Heart right ventricle (tissue), 16 donors: ENCODE measurements at regions of chr1 and their contacts with region 1.

Region 1: GRCh38 chr1:93708734-93709481 is 27.3 kb upstream of the BCAR3 start:
- DNase-seq: peak; percentile 33 to 60
- ATAC-seq: peak; percentile 82 to 92 (median 90)
- H3K4me3 ChIP-seq: no peak overlapping the region
- H3K27ac ChIP-seq: peak overlapping the region in 9 of 10 donors; percentile 28 to 70 (median 50)
- H3K4me1 ChIP-seq: peaks cover 11 to 46% (median 32%) of the 10 kb centered on the region in 9 donors
- H3K27me3 ChIP-seq: no peaks in the 10 kb centered on the region
- CTCF ChIP-seq: no peak

Region 2: DNA sequence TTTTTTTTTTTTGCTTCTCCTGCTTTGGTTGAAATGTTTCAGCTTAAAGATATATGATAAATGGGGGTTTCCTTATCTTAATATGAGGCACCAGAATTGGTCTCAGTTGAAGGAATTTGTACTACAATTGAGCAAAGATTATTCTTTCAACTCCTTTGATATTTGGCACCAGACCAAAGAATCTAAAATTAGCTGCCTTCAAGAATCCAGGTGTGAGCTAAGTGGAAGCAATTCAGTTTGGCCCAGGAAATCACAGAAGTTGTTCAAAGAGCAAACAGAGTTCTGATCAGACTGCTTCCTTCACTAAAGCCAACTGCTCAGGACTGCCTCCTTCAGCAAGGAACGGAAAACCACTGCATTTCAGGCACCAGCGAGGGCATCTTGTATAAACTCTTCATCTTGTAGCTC is 41.0 kb after region 1 on chr1:
- intact Hi-C with region 1: loop called in 2 of 10 experiments (anchors 5 kb)
- DNase-seq: no peak
- ATAC-seq: no peak
- H3K4me3 ChIP-seq: no peak overlapping the region
- H3K27ac ChIP-seq: no peak overlapping the region
- H3K4me1 ChIP-seq: peaks cover 4 to 44% (median 34%) of the 10 kb centered on the region in 9 donors
- H3K27me3 ChIP-seq: peaks cover 0 to 13% (median 0%) of the 10 kb centered on the region in 7 donors
- CTCF ChIP-seq: peak in 6 of 9 donors; percentile 7 to 39 (median 23)

Region 3: DNA sequence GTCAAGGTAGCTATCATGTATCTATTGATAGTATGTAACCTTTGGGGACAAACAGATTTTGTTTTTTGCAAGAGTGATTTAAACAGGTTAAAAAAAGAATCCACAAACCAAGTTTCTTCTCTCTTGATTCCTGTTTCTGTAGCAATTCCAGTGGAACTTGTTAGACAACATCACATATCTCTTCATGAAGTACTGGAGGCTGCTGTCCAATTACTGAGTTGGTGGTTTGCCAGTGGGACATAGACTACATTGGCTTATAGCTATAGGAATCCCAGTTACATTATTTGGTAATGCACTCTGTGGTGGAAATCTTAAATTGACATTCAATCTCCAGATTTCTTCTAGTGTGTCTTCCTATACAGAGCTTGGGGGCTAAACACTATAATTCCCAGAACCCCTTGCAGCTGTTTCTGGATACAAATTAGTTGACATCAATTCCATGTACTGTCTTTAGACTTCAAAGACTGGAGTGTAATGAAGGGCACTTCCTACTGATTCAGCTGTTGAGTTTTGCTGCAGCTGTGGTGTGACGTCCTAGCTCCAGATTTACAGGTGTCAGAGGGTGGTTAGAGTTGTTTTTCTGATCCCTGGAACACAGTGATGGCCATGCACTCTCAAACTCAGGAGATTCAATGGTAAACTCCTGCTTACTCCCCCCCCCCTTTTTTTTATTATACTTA is 229.7 kb after region 1 on chr1:
- intact Hi-C with region 1: no loop called
- DNase-seq: no peak
- ATAC-seq: no peak
- H3K4me3 ChIP-seq: no peak overlapping the region
- H3K27ac ChIP-seq: no peak overlapping the region
- H3K4me1 ChIP-seq: no peaks in the 10 kb centered on the region
- H3K27me3 ChIP-seq: no peaks in the 10 kb centered on the region
- CTCF ChIP-seq: no peak